Heart right ventricle (tissue), 16 donors: ENCODE measurements at regions of chr7 and their contacts with region 1.

Region 1: GRCh38 chr7:107462740-107463444 is 7.0 kb upstream of the GPR22 start:
- DNase-seq: peak; percentile 46 to 61
- ATAC-seq: peak; percentile 75 to 96 (median 90)
- H3K4me3 ChIP-seq: no peak overlapping the region
- H3K27ac ChIP-seq: peak overlapping the region in 7 of 10 donors; percentile 8 to 65 (median 51)
- H3K4me1 ChIP-seq: peaks cover 0 to 39% (median 5%) of the 10 kb centered on the region in 9 donors
- H3K27me3 ChIP-seq: no peaks in the 10 kb centered on the region
- CTCF ChIP-seq: peak; percentile 54 to 91 (median 73)

Region 2: DNA sequence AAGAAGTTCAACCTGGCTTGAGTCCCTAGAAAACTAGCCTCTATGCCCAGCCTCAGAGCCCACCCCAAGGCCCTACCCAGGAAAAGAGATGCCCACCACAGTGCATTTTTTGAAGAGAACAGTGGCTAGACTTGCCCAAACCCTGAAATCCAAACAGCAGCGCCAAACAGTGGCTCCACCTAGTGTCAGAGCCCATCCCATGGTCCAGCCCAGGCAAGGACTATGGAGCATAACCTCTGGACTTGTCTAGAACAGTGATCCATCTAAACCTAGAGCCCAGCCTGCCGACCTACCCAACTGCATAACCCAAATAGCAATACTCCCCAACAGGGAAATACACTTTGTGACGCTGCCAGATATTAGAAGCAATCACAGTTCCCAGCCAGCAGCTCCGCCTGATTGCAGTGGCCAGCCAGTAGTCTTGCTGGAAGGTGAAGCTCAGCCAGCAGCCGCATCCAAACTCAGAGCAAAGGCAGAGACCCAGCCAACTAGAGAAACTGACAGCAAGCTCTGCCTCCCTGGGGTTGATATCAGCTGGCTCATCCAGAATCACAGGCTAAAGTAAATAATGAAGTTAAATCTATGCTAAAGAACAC is 249.6 kb before region 1 on chr7:
- intact Hi-C with region 1: loop called in 7 of 10 experiments (anchors 10 kb)
- DNase-seq: peak; percentile 33 to 55
- ATAC-seq: peak; percentile 61 to 86 (median 74)
- H3K4me3 ChIP-seq: no peak overlapping the region
- H3K27ac ChIP-seq: peak overlapping the region in 6 of 10 donors; percentile 6 to 45 (median 40)
- H3K4me1 ChIP-seq: peaks cover 0 to 20% (median 6%) of the 10 kb centered on the region in 9 donors
- H3K27me3 ChIP-seq: no peaks in the 10 kb centered on the region
- CTCF ChIP-seq: peak in 1 of 9 donors; percentile 14

Region 3: GRCh38 chr7:107743567-107744344 is 280.9 kb after region 1 on chr7 and contains the start of gene CBLL1:
- intact Hi-C with region 1: loop called in 1 of 10 experiments (anchors 5 kb)
- DNase-seq: peak; percentile 97
- ATAC-seq: peak; percentile 98 to 99 (median 99)
- H3K4me3 ChIP-seq: peak within 1 kb of the TSS; percentile 52 to 97 (median 88)
- H3K27ac ChIP-seq: peak within 1 kb of the TSS; percentile 92 to 98 (median 96)
- H3K4me1 ChIP-seq: peaks cover 11 to 49% (median 46%) of the 10 kb centered on the region in 9 donors
- H3K27me3 ChIP-seq: no peaks in the 10 kb centered on the region
- CTCF ChIP-seq: peak; percentile 42 to 93 (median 73)
- total RNA-seq, gene CBLL1: 18.3 to 31.3 (median 23.1) TPM

Region 4: DNA sequence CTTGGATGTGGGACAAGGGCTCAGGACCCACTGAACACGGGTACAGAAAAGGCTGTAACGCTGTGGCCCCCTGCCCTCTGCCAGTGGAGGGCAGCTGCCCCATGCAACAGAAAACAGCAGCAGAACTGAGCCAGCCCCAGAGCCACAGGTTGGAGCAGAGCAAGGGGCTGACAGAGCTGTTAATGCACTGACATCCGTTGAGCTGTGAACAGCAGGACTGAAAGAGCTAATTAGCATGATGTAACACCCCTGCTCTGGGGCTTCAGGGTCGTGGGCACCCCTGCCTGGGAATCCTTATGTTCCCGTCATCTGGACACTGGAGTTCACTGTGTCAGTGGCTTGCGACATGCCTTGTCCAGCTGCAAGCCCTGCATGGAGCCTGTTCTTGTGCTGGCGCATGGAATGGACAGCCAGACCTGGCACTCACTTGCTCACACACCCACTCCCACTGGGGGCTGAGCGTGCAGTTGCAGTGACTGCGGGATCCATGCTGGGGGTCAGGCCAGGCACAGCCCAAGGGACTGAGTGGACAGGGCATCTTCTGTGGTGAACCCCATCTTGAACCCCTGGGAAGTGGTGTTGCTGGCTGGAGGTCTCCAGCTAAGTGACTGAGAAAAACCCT is 1400.4 kb after region 1 on chr7:
- intact Hi-C with region 1: no loop called
- DNase-seq: no peak
- ATAC-seq: no peak
- H3K4me3 ChIP-seq: no peak overlapping the region
- H3K27ac ChIP-seq: no peak overlapping the region
- H3K4me1 ChIP-seq: no peaks in the 10 kb centered on the region
- H3K27me3 ChIP-seq: no peaks in the 10 kb centered on the region
- CTCF ChIP-seq: no peak